ENCODE measurements at regions of chr6 and their contacts with region 1.

Region 1: DNA sequence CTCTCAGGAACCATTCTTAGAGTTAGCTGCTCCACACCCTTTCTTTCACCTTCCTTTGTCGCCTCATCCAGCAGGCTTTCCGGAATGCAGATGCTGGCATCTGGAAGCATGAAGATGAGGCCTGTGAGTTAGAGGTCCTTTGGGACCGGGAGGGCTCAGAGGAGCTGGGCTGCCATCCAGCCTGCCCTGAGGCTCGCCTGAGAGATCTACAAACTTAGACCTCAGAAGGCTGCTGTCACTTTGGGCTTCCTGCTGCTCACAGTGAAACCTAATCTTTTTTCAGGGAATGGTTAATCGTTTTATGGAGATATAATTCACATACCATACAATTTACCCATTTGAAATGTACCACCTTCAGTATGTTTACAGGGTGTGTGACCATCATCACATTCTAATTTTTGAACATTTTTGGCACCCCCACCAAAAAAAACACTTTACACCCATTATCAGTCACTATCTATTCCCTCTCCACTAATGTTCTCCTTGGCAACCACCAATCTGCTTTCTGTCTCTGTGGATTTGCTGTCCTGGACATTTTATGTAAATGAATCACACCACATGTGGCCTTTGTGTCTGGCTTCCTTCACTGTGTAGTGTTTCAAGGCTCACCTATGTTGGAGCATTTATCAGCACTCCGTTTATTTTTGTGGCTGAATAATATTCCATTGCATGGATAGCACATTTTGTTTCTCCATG is 20.0 kb upstream of the MPC1 start:
- DNase-seq: no peak
- H3K4me3 ChIP-seq: no peak overlapping the region
- H3K4me3 Mint-ChIP-seq: no peak overlapping the region
- H3K27ac ChIP-seq: no peak overlapping the region
- H3K27ac Mint-ChIP-seq: peak overlapping the region in 3 of 7 donors; percentile 43 to 72 (median 67)
- H3K4me1 ChIP-seq: no peaks in the 10 kb centered on the region
- H3K4me1 Mint-ChIP-seq: peaks cover 4 to 9% (median 7%) of the 10 kb centered on the region in 4 donors
- H3K27me3 ChIP-seq: no peaks in the 10 kb centered on the region
- H3K27me3 Mint-ChIP-seq: no peaks in the 10 kb centered on the region

Region 2: DNA sequence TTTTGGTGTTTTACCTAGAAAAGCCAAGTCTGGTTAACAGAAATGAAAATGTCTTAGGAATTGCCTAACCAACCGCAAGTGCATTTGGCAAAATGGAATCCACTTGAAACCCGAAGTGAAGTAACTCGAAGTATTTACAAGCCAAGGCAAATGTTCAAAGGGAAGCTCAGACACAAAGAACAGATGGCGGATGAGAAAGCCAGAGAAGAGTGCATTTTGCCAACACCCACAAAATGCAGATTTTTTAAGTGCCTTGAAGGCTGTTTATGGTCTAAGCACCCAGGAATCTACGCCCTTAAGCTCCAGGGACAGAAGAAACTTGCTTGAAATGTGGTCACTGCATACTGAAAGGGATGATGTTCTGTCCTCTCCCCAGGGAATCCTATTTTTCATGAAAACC is 165.1 kb before region 1 on chr6:
- CTCF ChIA-PET with region 1: interaction called, 12 read pairs
- POLR2A ChIA-PET with region 1: no interaction called
- intact Hi-C with region 1: no loop called
- DNase-seq: no peak
- H3K4me3 ChIP-seq: no peak overlapping the region
- H3K4me3 Mint-ChIP-seq: no peak overlapping the region
- H3K27ac ChIP-seq: no peak overlapping the region
- H3K27ac Mint-ChIP-seq: no peak overlapping the region
- H3K4me1 ChIP-seq: peaks cover 3% of the 10 kb centered on the region
- H3K4me1 Mint-ChIP-seq: peaks cover 0 to 9% (median 9%) of the 10 kb centered on the region in 4 donors
- H3K27me3 ChIP-seq: no peaks in the 10 kb centered on the region
- H3K27me3 Mint-ChIP-seq: peaks cover 10 to 15% of the 10 kb centered on the region in 2 donors

Region 3: DNA sequence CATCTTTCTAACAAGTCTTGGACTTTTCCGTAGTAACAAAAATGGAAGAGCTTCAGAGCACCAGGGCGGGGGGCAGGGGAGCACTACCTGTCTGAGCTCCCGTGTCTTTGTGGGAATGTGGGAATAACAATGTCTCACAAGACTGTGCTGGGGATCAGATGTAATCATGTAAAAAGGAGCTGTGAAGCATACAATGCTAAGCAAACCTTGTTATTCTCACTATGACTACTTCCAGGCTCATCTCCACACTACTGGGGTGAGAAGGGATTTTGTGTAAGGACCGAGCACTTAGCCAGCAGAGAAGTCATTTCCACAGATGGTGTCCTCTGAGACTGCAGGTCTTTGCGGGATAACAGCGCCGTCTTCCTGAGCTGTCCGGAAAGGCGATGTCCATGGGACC is 121.6 kb before region 1 on chr6:
- CTCF ChIA-PET with region 1: interaction called, 75 read pairs
- POLR2A ChIA-PET with region 1: no interaction called
- intact Hi-C with region 1: no loop called
- DNase-seq: no peak
- H3K4me3 ChIP-seq: no peak overlapping the region
- H3K4me3 Mint-ChIP-seq: no peak overlapping the region
- H3K27ac ChIP-seq: no peak overlapping the region
- H3K27ac Mint-ChIP-seq: no peak overlapping the region
- H3K4me1 ChIP-seq: no peaks in the 10 kb centered on the region
- H3K4me1 Mint-ChIP-seq: peaks cover 0 to under 1% (median under 1%) of the 10 kb centered on the region in 4 donors
- H3K27me3 ChIP-seq: no peaks in the 10 kb centered on the region
- H3K27me3 Mint-ChIP-seq: peaks cover 0 to 4% of the 10 kb centered on the region in 2 donors

Region 4: DNA sequence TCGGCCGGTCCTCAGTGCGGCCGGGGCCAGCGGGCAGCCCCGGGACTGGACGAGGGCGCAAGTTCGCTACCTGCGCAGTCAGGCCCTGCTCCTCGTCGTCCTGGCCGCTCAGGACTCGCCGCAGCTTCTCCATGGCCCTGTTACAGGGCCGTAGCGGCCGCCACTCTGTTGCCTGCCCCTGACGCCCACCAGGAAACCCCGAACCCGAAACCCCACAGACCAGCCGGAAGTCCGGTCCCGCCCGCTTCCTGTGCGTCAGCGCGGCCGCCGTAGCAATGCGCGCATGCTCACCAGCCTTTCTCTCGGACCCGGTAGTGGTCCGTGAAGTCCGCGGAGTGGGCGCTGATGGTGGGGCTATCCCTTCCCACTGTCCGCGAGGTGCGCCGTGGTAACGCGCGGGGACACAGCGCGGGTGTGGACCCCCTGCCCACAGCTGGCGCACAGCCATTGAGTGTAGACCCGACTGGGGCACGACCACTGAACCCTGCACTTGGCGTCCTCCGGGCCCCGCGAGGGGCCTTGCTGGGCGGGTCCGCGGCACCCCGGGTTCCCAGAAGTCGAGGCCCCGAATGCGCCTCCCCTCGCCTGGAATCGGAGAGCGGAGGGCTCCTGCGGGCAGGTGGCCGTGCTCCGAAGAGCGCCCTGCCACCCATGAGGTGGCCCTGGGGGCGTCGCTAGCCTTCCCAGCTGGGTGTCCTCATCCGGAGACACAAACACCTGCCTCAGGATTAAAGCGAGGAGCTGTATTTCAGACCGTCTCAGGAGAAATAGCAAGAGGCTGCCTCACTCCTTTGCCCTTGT is 60.2 kb before region 1 on chr6 and contains the start of gene SFT2D1:
- CTCF ChIA-PET with region 1: no interaction called
- POLR2A ChIA-PET with region 1: no interaction called
- intact Hi-C with region 1: loop called (anchors 5 kb)
- DNase-seq: peak; percentile 48 to 70 (median 57)
- H3K4me3 ChIP-seq: peak within 1 kb of the TSS; percentile 26 to 93
- H3K4me3 Mint-ChIP-seq: peak within 1 kb of the TSS; percentile 88 to 94 (median 92)
- H3K27ac ChIP-seq: peak within 1 kb of the TSS; percentile 64
- H3K27ac Mint-ChIP-seq: peak within 1 kb of the TSS; percentile 66 to 94 (median 91)
- H3K4me1 ChIP-seq: peaks cover 49% of the 10 kb centered on the region
- H3K4me1 Mint-ChIP-seq: peaks cover 5 to 18% (median 11%) of the 10 kb centered on the region in 4 donors
- H3K27me3 ChIP-seq: no peaks in the 10 kb centered on the region
- H3K27me3 Mint-ChIP-seq: no peaks in the 10 kb centered on the region
- total RNA-seq, gene SFT2D1: 37.5 to 40.3 TPM

Region 5: GRCh38 chr6:166419286-166419685 is 16.6 kb after region 1 on chr6:
- CTCF ChIA-PET with region 1: interaction called, 31 read pairs
- POLR2A ChIA-PET with region 1: interaction called, 11 read pairs
- intact Hi-C with region 1: loop called (anchors 1 kb)
- DNase-seq: peak; percentile 45 to 82 (median 53)
- H3K4me3 ChIP-seq: no peak overlapping the region
- H3K4me3 Mint-ChIP-seq: peak overlapping the region in 7 of 8 donors; percentile 55 to 79 (median 70)
- H3K27ac ChIP-seq: peak overlapping the region; percentile 42
- H3K27ac Mint-ChIP-seq: peak overlapping the region; percentile 96 to 99 (median 98)
- H3K4me1 ChIP-seq: peaks cover 74% of the 10 kb centered on the region
- H3K4me1 Mint-ChIP-seq: peaks cover 55 to 74% (median 68%) of the 10 kb centered on the region in 4 donors
- H3K27me3 ChIP-seq: no peaks in the 10 kb centered on the region
- H3K27me3 Mint-ChIP-seq: peaks cover 0 to 4% of the 10 kb centered on the region in 2 donors

Region 6: DNA sequence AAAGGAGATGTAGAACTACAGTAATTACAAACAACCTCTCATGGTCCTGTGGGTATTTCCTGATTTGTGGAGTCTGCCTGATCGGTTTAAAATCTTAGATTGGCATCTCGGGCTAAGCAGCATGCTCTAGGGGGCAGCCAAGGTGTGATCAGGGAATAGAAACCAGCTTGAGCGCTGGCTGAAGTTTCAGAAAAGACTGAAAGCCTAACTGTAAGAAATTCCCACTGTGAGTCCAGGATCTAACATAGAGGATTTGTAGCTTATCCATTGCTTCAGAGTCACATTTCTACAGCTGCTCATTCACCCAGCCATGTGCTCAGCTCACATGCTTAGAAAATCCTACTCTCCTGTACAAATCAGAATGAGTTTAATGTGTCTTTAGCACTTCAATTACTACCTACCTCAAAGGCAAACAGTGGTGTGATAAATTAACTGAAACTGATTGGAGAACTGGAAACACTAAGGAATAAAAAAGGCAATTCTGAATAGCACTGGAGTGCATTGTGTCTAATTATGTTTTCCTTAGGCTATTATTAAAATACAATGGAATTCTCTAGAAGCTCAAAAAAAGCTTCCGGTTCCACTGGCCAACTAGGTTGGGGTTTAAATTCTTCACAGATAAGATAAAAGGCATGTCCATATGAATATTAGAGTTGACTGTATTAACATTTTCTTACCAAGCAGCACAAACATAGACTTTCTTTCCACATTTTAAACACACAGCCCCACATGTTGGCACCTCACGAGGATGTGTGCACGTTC is 53.8 kb after region 1 on chr6:
- CTCF ChIA-PET with region 1: interaction called, 17 read pairs
- POLR2A ChIA-PET with region 1: no interaction called
- intact Hi-C with region 1: no loop called
- DNase-seq: peak in 2 of 5 donors; percentile 13 to 24
- H3K4me3 ChIP-seq: no peak overlapping the region
- H3K4me3 Mint-ChIP-seq: no peak overlapping the region
- H3K27ac ChIP-seq: no peak overlapping the region
- H3K27ac Mint-ChIP-seq: peak overlapping the region in 3 of 7 donors; percentile 24 to 63 (median 38)
- H3K4me1 ChIP-seq: no peaks in the 10 kb centered on the region
- H3K4me1 Mint-ChIP-seq: peaks cover 0 to 2% (median under 1%) of the 10 kb centered on the region in 4 donors
- H3K27me3 ChIP-seq: no peaks in the 10 kb centered on the region
- H3K27me3 Mint-ChIP-seq: no peaks in the 10 kb centered on the region